MCF 10A (cell line): ENCODE measurements at regions of chr12 and their contacts with region 1.

Region 1: DNA sequence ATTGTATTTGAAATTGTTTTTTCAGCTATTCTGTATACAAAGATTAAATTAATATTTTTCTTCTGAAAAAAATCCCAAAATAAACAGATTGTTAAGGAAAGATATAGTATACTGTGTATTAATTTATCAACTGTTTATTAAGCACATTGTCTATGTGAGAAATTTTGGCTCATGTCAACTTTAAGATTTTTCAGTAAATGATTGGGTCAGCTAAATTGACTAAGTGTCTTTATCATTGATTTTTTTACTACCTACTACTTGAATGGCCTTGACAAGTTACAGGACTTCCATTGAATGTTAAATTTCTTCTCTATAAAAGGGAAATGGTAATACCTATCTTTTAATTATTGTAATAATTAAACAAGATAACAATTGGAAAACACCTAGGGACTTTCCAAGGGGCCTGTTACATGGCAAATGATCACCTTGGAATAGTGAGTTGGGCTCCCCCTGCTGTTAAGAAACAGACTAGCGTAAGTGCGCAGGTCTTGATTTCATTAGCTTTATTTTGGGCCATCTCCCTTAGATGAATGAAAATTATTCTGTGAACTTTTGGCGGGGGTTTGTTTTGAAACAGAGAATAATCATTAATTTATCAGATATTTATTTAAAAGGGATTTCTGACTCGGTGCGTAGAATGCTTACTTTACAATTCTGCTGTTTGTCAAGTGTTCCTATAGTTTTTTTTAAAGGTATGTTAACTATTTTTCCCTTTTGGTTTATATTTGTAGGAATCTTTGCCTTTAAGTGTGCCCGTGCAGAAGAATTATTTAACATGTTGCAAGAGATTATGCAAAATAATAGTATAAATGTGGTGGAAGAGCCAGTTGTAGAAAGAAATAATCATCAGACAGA is 14.5 kb upstream of the CCT2 start:
- DNase-seq: peak; percentile 80
- H3K4me3 Mint-ChIP-seq: no peak overlapping the region
- H3K27ac Mint-ChIP-seq: peak overlapping the region; percentile 55
- H3K4me1 Mint-ChIP-seq: peaks cover 13% of the 10 kb centered on the region
- H3K27me3 Mint-ChIP-seq: no peaks in the 10 kb centered on the region
- CTCF ChIP-seq: peak; percentile 71

Region 2: DNA sequence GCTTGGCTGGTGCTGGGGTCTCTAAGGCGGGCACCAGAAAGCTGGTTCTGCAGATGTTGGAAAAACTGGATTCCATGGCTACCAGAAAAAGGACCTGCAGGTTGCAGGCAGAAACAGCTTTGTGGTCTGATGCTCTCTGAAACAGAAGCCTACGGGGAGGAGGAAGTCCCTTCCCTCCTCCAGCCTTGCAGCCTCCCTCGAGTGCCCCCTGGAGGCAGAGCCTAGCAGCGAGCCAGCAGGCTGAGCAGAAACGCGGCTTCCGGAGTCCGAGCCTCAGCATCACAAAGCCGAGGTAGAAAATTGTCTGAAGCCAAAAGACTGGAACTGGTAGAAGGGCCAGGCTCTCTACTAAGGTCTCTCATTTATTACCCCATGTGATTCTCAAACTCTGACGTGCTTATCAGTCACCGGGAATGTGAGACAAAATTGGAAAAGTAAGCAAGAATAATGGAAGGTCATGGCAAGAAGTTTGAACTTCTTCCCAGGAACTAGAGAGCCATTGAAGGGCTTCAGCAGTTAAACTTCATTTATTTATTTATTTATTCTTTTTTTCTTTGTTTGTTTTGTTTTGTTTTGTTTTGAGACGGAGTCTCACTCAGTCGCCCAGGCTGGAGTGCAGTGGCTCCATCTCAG is 413.6 kb before region 1 on chr12:
- CTCF ChIA-PET with region 1: interaction called, 7 read pairs
- POLR2A ChIA-PET with region 1: no interaction called
- intact Hi-C with region 1: loop called (anchors 2 kb)
- DNase-seq: peak; percentile 71
- H3K4me3 Mint-ChIP-seq: no peak overlapping the region
- H3K27ac Mint-ChIP-seq: no peak overlapping the region
- H3K4me1 Mint-ChIP-seq: peaks cover 11% of the 10 kb centered on the region
- H3K27me3 Mint-ChIP-seq: no peaks in the 10 kb centered on the region
- CTCF ChIP-seq: peak; percentile 63

Region 3: DNA sequence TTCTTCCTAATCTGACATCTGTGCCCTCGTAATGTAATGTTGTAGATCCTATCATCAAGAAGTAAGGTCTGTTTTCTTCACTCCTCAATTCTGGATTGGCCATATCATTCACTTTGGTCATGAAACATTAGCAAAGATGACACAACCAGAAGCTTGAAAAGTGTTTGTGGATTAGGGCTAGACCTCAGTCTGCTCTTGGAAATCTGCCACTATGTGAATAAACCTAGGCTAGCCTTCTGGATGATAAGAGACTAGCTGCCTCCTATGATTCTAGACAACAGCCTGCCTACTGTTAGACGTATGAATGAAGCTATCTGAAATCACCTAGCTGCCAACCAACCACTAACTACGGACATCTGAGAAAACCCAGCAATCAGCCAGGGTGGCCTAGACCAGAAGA is 261.3 kb before region 1 on chr12:
- CTCF ChIA-PET with region 1: no interaction called
- POLR2A ChIA-PET with region 1: no interaction called
- intact Hi-C with region 1: no loop called
- DNase-seq: no peak
- H3K4me3 Mint-ChIP-seq: no peak overlapping the region
- H3K27ac Mint-ChIP-seq: no peak overlapping the region
- H3K4me1 Mint-ChIP-seq: no peaks in the 10 kb centered on the region
- H3K27me3 Mint-ChIP-seq: no peaks in the 10 kb centered on the region
- CTCF ChIP-seq: no peak

Region 4: DNA sequence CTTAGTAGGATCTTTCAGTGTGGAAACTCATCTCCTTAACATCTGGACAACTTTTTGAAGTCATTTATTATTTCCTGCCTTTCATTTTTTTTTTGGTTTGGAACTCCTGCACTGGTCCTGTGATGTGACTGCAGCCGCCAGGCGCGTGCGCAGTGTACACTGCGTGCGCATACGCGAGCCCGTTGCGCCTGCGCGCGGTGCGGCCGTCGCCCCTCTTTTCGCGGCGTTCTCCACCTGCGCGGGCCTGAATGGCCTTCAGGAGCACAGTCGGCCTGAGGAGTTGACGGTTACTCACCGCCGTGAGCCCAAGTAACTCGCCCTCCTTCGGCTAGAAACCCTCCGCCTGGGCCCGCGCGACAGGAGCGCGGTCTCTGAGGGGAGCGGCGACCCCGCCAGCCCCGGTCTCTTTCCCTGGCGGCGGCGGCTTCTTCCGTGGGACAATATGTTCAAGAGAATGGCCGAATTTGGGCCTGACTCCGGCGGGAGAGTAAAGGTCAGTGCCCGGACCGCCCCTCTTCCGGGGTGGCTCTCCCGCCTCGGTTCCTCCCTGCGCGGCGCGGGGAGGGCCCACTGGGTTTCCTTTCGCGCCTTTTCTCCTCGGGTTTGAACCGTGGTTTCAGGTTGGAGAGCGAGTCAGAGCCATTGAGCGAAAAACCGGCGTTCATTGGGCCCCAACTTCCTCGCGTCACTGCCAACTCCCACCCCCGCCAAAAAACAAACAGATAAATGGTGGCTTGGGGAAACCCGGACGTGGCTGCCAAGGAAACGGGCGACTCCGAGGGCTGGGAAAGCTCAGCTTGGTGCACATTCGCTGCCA is 211.0 kb before region 1 on chr12 and contains the start of gene YEATS4:
- CTCF ChIA-PET with region 1: interaction called, 37 read pairs
- POLR2A ChIA-PET with region 1: interaction called, 3 read pairs
- intact Hi-C with region 1: loop called (anchors 1 kb)
- DNase-seq: peak; percentile 95
- H3K4me3 Mint-ChIP-seq: peak within 1 kb of the TSS; percentile 83
- H3K27ac Mint-ChIP-seq: peak within 1 kb of the TSS; percentile 84
- H3K4me1 Mint-ChIP-seq: peaks cover 15% of the 10 kb centered on the region
- H3K27me3 Mint-ChIP-seq: peaks cover 6% of the 10 kb centered on the region
- CTCF ChIP-seq: no peak
- total RNA-seq, gene YEATS4: 26.1 and 30.9 TPM in 2 replicates

Region 5: GRCh38 chr12:69415471-69416275 is 155.1 kb before region 1 on chr12:
- CTCF ChIA-PET with region 1: interaction called, 38 read pairs
- POLR2A ChIA-PET with region 1: interaction called, 4 read pairs
- intact Hi-C with region 1: loop called (anchors 1 kb)
- DNase-seq: peak; percentile 65
- H3K4me3 Mint-ChIP-seq: no peak overlapping the region
- H3K27ac Mint-ChIP-seq: no peak overlapping the region
- H3K4me1 Mint-ChIP-seq: peaks cover 9% of the 10 kb centered on the region
- H3K27me3 Mint-ChIP-seq: no peaks in the 10 kb centered on the region
- CTCF ChIP-seq: peak; percentile 74

Region 6: DNA sequence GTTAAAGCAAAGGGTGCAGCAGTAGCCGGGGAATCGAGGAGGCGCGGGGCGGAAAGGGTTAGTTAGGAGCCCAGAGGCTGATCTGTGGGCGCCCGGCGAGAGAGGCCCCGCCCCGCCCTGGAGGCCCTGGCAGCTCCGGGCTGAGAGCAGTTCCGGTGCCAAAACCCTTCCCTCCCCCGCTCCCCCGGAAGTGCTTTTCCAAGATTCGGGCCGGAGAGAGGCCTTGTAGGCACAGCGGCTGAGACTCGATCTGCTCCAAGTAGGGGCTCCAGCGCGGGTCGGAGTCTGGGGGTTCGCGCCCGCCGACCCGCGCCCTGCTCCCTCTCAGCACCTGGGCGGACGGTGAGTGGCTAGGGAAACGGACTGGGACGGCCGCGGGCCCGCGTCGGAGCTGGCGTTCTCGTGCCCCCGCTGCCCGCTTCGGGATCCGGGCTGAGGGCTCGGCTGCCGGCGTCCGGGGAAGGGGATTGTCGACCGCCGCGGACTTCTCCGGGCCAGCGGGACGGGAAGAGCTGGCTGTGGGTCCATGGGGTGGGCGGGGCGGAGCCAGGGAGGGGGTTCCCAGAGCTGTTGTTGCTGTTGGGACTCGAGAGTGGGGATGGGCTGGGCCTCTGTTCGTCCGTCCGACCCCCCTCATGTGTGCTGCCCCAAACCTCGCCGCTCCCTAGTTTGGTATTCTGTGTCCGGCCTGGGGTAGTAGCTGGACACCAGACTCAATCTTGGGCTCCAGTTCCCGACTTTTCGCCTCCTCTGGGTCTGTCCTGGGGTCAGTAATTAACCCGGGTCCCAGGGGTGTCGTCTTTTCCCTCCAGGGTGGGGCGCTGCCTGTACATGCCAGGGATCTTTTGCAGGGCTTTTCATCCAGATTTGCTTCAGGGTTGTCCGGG is 100.3 kb before region 1 on chr12 and contains the start of gene FRS2:
- CTCF ChIA-PET with region 1: interaction called, 30 read pairs
- POLR2A ChIA-PET with region 1: interaction called, 53 read pairs
- intact Hi-C with region 1: loop called (anchors 1 kb)
- DNase-seq: peak; percentile 90
- H3K4me3 Mint-ChIP-seq: peak within 1 kb of the TSS; percentile 95
- H3K27ac Mint-ChIP-seq: peak within 1 kb of the TSS; percentile 97
- H3K4me1 Mint-ChIP-seq: peaks cover 63% of the 10 kb centered on the region
- H3K27me3 Mint-ChIP-seq: no peaks in the 10 kb centered on the region
- CTCF ChIP-seq: peak; percentile 59
- total RNA-seq, gene FRS2: 21.3 and 28.1 TPM in 2 replicates

Region 7: GRCh38 chr12:69527506-69528272 is 43.1 kb before region 1 on chr12:
- CTCF ChIA-PET with region 1: interaction called, 6 read pairs
- POLR2A ChIA-PET with region 1: interaction called, 3 read pairs
- intact Hi-C with region 1: loop called (anchors 5 kb)
- DNase-seq: peak; percentile 51
- H3K4me3 Mint-ChIP-seq: no peak overlapping the region
- H3K27ac Mint-ChIP-seq: peak overlapping the region; percentile 4
- H3K4me1 Mint-ChIP-seq: peaks cover 20% of the 10 kb centered on the region
- H3K27me3 Mint-ChIP-seq: no peaks in the 10 kb centered on the region
- CTCF ChIP-seq: no peak

Region 8: DNA sequence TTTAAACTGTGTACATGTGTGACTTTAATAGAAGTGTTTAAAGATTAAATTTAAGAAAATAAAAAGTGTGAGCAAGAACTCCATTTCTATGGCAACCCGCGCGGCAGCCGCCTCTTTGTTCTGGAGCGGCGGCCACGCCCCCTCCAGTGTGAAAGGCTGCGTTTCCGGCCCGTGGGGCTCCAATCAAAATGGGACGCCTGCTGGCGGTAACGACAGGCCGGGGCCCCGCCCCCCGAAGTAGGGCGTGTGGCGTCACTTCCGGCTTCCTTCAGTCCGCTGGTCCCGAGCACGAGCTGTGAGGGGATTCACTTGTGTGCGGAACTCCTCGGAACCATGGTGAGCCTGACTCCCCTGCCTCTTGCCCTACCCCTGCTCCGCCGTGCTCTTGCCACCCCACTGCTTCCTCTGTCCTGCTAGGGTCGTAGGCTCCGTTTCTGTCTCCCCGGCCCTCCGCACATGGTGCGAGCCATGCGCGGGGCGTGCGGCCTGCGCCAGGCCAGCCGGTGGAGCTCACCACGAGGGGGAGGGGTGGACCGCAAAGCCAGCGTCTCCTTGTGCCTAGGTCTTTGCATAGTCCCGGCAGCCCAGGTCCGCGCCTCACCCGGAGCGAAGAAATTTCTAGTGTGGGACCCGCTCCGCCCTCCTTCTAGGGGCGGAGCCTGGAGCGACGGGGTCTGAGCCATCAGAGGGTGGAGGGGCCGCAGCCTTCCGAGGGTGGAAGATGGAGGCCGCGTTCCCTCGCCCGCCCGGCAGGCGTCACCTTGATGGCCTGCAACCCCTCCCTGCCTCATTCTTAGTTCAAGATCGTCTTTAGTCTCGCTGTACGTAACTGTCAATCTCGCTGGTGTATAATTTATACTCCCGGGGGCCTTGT is 14.7 kb after region 1 on chr12 and contains the start of gene CCT2:
- CTCF ChIA-PET with region 1: interaction called, 20 read pairs
- POLR2A ChIA-PET with region 1: interaction called, 16 read pairs
- intact Hi-C with region 1: no loop called
- DNase-seq: peak; percentile 94
- H3K4me3 Mint-ChIP-seq: peak within 1 kb of the TSS; percentile 99
- H3K27ac Mint-ChIP-seq: peak within 1 kb of the TSS; percentile 95
- H3K4me1 Mint-ChIP-seq: no peaks in the 10 kb centered on the region
- H3K27me3 Mint-ChIP-seq: no peaks in the 10 kb centered on the region
- CTCF ChIP-seq: peak; percentile 14
- total RNA-seq, gene CCT2: 161 and 212 TPM in 2 replicates